ENCODE measurements at regions of chr11 and their contacts with region 1.

Region 1: GRCh38 chr11:32231905-32232493 is 141.1 kb downstream of the RCN1 start:
- H3K4me3 ChIP-seq: no peak overlapping the region
- H3K27ac ChIP-seq: no peak overlapping the region
- H3K4me1 ChIP-seq: no peaks in the 10 kb centered on the region
- CTCF ChIP-seq: no peak

Region 2: GRCh38 chr11:32213223-32213622 is 18.8 kb before region 1 on chr11:
- CTCF ChIA-PET with region 1: interaction called, 13 read pairs
- POLR2A ChIA-PET with region 1: no interaction called
- H3K4me3 ChIP-seq: no peak overlapping the region
- H3K27ac ChIP-seq: no peak overlapping the region
- H3K4me1 ChIP-seq: no peaks in the 10 kb centered on the region
- CTCF ChIP-seq: no peak

Region 3: GRCh38 chr11:32221476-32222010 is 10.5 kb before region 1 on chr11:
- CTCF ChIA-PET with region 1: interaction called, 22 read pairs
- POLR2A ChIA-PET with region 1: no interaction called
- H3K4me3 ChIP-seq: no peak overlapping the region
- H3K27ac ChIP-seq: no peak overlapping the region
- H3K4me1 ChIP-seq: no peaks in the 10 kb centered on the region
- CTCF ChIP-seq: no peak

Region 4: DNA sequence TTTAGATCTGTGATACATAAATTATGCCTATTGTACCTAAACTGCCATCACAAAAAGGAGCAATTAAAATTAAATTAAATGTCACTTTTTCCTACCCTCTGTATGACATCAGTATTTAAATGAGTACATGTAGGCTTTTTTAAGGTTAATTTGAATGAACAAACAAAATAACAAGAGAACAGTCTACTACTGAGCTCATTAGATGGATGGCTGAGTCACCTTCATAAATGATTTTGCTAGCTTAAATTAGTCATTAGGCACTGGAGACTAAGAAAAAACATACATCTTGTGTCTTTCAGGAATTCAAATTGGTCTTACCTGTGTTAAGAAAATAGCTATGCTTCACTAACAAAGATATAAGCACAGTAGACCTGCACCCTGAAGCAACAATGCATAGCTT is 12.5 kb after region 1 on chr11:
- CTCF ChIA-PET with region 1: interaction called, 28 read pairs
- POLR2A ChIA-PET with region 1: interaction called, 3 read pairs
- H3K4me3 ChIP-seq: no peak overlapping the region
- H3K27ac ChIP-seq: no peak overlapping the region
- H3K4me1 ChIP-seq: no peaks in the 10 kb centered on the region
- CTCF ChIP-seq: no peak

Region 5: GRCh38 chr11:32255841-32256240 is 23.8 kb after region 1 on chr11:
- CTCF ChIA-PET with region 1: interaction called, 17 read pairs
- POLR2A ChIA-PET with region 1: interaction called, 3 read pairs
- H3K4me3 ChIP-seq: no peak overlapping the region
- H3K27ac ChIP-seq: no peak overlapping the region
- H3K4me1 ChIP-seq: no peaks in the 10 kb centered on the region
- CTCF ChIP-seq: no peak

Region 6: DNA sequence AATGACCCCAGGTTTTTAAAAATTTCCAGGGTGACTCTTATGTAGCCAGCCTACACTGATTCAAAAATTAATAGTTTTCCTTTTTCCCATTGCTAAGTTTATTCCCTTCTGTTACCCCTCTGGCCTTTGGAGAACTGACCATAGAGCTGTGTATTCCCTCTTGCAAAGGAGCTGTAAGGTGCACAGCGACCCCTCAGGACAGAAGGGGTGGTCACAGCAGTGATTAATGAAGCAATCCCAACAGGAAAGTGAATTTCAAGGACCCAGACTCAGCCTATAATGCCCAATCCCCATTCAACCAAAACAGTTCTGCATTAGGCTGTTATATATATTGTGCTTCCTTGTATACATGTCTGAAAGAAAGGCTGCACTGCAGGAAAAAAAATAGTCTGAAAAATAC is 56.3 kb after region 1 on chr11:
- CTCF ChIA-PET with region 1: no interaction called
- POLR2A ChIA-PET with region 1: no interaction called
- H3K4me3 ChIP-seq: no peak overlapping the region
- H3K27ac ChIP-seq: no peak overlapping the region
- H3K4me1 ChIP-seq: no peaks in the 10 kb centered on the region
- CTCF ChIP-seq: no peak

Region 7: GRCh38 chr11:32333320-32333991 is 101.5 kb after region 1 on chr11:
- CTCF ChIA-PET with region 1: no interaction called
- POLR2A ChIA-PET with region 1: no interaction called
- H3K4me3 ChIP-seq: no peak overlapping the region
- H3K27ac ChIP-seq: no peak overlapping the region
- H3K4me1 ChIP-seq: no peaks in the 10 kb centered on the region
- CTCF ChIP-seq: no peak

Measured in HEK293 (cell line).